B cell (primary cell): ENCODE measurements at regions of chr12 and their contacts with region 1.

Region 1: GRCh38 chr12:50074936-50075807 is 10.0 kb upstream of the SMARCD1 start:
- DNase-seq: peak; percentile 87
- ATAC-seq: peak; percentile 97
- H3K4me3 ChIP-seq: no peak overlapping the region
- H3K4me3 Mint-ChIP-seq: no peak overlapping the region
- H3K27ac ChIP-seq: no peak overlapping the region
- H3K27ac Mint-ChIP-seq: no peak overlapping the region
- H3K4me1 ChIP-seq: peaks cover 0 to 12% of the 10 kb centered on the region in 2 donors
- H3K4me1 Mint-ChIP-seq: peaks cover 4% of the 10 kb centered on the region
- H3K27me3 ChIP-seq: no peaks in the 10 kb centered on the region
- H3K27me3 Mint-ChIP-seq: peaks cover 11% of the 10 kb centered on the region
- CTCF ChIP-seq: peak; percentile 95

Region 2: DNA sequence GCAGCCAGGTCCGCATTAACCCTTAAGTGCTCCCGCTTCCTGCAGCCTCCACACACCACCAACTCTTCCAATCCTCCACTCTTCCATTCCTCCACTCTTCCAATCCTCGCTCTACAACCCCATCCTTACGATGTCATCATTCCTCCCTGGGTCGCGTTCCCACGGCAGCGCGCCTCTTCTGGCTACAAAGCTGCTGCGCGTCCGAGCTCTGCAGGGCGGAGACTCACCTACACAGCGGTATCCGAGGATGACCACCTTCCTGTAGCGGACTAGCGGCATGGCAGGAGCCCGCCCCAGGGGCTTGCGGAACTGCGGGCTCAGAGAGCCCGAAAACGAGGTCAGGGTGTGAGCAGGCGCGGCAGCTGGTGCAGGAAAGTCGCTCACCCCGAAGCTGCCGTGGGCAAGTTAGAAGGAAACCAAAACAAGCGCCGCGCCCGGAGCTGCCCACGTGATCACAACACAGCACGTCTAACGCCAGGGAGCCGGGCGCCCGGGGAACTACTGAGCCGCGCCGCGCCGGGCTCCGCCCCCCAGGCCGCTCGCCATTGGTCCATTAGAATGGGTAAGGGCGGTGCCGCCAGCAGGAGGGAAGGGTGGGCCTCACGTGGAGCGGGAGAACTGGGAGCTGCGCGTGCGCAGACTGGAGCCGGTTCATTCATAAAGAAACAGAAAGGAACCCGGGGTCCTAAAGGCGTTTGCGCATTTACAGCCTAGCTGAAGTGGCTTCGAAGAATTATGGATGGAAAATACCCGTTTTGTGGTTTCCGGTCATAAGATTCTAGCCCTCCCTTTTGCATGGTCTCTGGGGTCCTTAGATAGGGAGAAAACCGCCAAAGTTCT is 1005.4 kb before region 1 on chr12 and contains the start of gene RHEBL1:
- CTCF ChIA-PET with region 1: no interaction called
- POLR2A ChIA-PET with region 1: no interaction called
- intact Hi-C with region 1: no loop called
- DNase-seq: peak; percentile 99
- ATAC-seq: peak; percentile 100
- H3K4me3 ChIP-seq: peak within 1 kb of the TSS; percentile 69 to 96 (median 87)
- H3K4me3 Mint-ChIP-seq: peak within 1 kb of the TSS; percentile 94
- H3K27ac ChIP-seq: peak within 1 kb of the TSS; percentile 61 to 92
- H3K27ac Mint-ChIP-seq: peak within 1 kb of the TSS; percentile 86
- H3K4me1 ChIP-seq: peaks cover 10 to 15% of the 10 kb centered on the region in 2 donors
- H3K4me1 Mint-ChIP-seq: peaks cover 19% of the 10 kb centered on the region
- H3K27me3 ChIP-seq: no peaks in the 10 kb centered on the region
- H3K27me3 Mint-ChIP-seq: no peaks in the 10 kb centered on the region
- CTCF ChIP-seq: no peak
- total RNA-seq, gene RHEBL1: 3.0 TPM in 2 replicates

Region 3: GRCh38 chr12:49130151-49131050 is 944.8 kb before region 1 on chr12:
- CTCF ChIA-PET with region 1: no interaction called
- POLR2A ChIA-PET with region 1: no interaction called
- intact Hi-C with region 1: no loop called
- DNase-seq: peak; percentile 97
- ATAC-seq: peak; percentile 51
- H3K4me3 ChIP-seq: peak overlapping the region; percentile 94 to 100 (median 100)
- H3K4me3 Mint-ChIP-seq: peak overlapping the region; percentile 97
- H3K27ac ChIP-seq: peak overlapping the region; percentile 93 to 98
- H3K27ac Mint-ChIP-seq: peak overlapping the region; percentile 99
- H3K4me1 ChIP-seq: peaks cover 28 to 36% of the 10 kb centered on the region in 2 donors
- H3K4me1 Mint-ChIP-seq: peaks cover 56% of the 10 kb centered on the region
- H3K27me3 ChIP-seq: no peaks in the 10 kb centered on the region
- H3K27me3 Mint-ChIP-seq: no peaks in the 10 kb centered on the region
- CTCF ChIP-seq: peak; percentile 88

Region 4: GRCh38 chr12:50038336-50038735 is 36.8 kb before region 1 on chr12:
- CTCF ChIA-PET with region 1: interaction called, 10 read pairs
- POLR2A ChIA-PET with region 1: no interaction called
- intact Hi-C with region 1: loop called (anchors 2 kb)
- DNase-seq: no peak
- ATAC-seq: no peak
- H3K4me3 ChIP-seq: no peak overlapping the region
- H3K4me3 Mint-ChIP-seq: no peak overlapping the region
- H3K27ac ChIP-seq: no peak overlapping the region
- H3K27ac Mint-ChIP-seq: no peak overlapping the region
- H3K4me1 ChIP-seq: peaks cover 7% of the 10 kb centered on the region in 2 donors
- H3K4me1 Mint-ChIP-seq: peaks cover 2% of the 10 kb centered on the region
- H3K27me3 ChIP-seq: peaks cover 0 to 3% (median 0%) of the 10 kb centered on the region in 4 experiments
- H3K27me3 Mint-ChIP-seq: peaks cover 10% of the 10 kb centered on the region
- CTCF ChIP-seq: no peak

Region 5: GRCh38 chr12:50111693-50112455 is 36.7 kb after region 1 on chr12 and contains the start of gene COX14:
- CTCF ChIA-PET with region 1: interaction called, 10 read pairs
- POLR2A ChIA-PET with region 1: interaction called, 3 read pairs
- intact Hi-C with region 1: no loop called
- DNase-seq: peak; percentile 100
- ATAC-seq: peak; percentile 77
- H3K4me3 ChIP-seq: peak within 1 kb of the TSS; percentile 51 to 99 (median 88)
- H3K4me3 Mint-ChIP-seq: peak within 1 kb of the TSS; percentile 96
- H3K27ac ChIP-seq: peak within 1 kb of the TSS; percentile 85 to 96
- H3K27ac Mint-ChIP-seq: peak within 1 kb of the TSS; percentile 98
- H3K4me1 ChIP-seq: peaks cover 30 to 62% of the 10 kb centered on the region in 2 donors
- H3K4me1 Mint-ChIP-seq: peaks cover 65% of the 10 kb centered on the region
- H3K27me3 ChIP-seq: no peaks in the 10 kb centered on the region
- H3K27me3 Mint-ChIP-seq: no peaks in the 10 kb centered on the region
- CTCF ChIP-seq: peak; percentile 28
- total RNA-seq, gene COX14: 31.8 and 33.8 TPM in 2 replicates

Region 6: GRCh38 chr12:50174971-50175715 is 100.0 kb after region 1 on chr12:
- CTCF ChIA-PET with region 1: interaction called, 343 read pairs
- POLR2A ChIA-PET with region 1: interaction called, 4 read pairs
- intact Hi-C with region 1: loop called (anchors 1 kb)
- DNase-seq: peak; percentile 73
- ATAC-seq: no peak
- H3K4me3 ChIP-seq: no peak overlapping the region
- H3K4me3 Mint-ChIP-seq: no peak overlapping the region
- H3K27ac ChIP-seq: no peak overlapping the region
- H3K27ac Mint-ChIP-seq: no peak overlapping the region
- H3K4me1 ChIP-seq: no peaks in the 10 kb centered on the region
- H3K4me1 Mint-ChIP-seq: no peaks in the 10 kb centered on the region
- H3K27me3 ChIP-seq: no peaks in the 10 kb centered on the region
- H3K27me3 Mint-ChIP-seq: no peaks in the 10 kb centered on the region
- CTCF ChIP-seq: peak; percentile 93

Region 7: GRCh38 chr12:50314629-50315312 is 239.6 kb after region 1 on chr12:
- CTCF ChIA-PET with region 1: interaction called, 12 read pairs
- POLR2A ChIA-PET with region 1: no interaction called
- intact Hi-C with region 1: no loop called
- DNase-seq: peak; percentile 18
- ATAC-seq: no peak
- H3K4me3 ChIP-seq: no peak overlapping the region
- H3K4me3 Mint-ChIP-seq: no peak overlapping the region
- H3K27ac ChIP-seq: no peak overlapping the region
- H3K27ac Mint-ChIP-seq: no peak overlapping the region
- H3K4me1 ChIP-seq: no peaks in the 10 kb centered on the region
- H3K4me1 Mint-ChIP-seq: no peaks in the 10 kb centered on the region
- H3K27me3 ChIP-seq: no peaks in the 10 kb centered on the region
- H3K27me3 Mint-ChIP-seq: no peaks in the 10 kb centered on the region
- CTCF ChIP-seq: peak; percentile 26